Heart left ventricle (tissue), 16 donors: ENCODE measurements at regions of chrX and their contacts with region 1.

Region 1: GRCh38 chrX:53422086-53422860 is at the start of gene SMC1A:
- DNase-seq: peak; percentile 94 to 99 (median 97)
- ATAC-seq: peak; percentile 97 to 99 (median 98)
- H3K4me3 ChIP-seq: peak within 1 kb of the TSS; percentile 47 to 84 (median 72)
- H3K27ac ChIP-seq: peak within 1 kb of the TSS; percentile 82 to 95 (median 91)
- H3K4me1 ChIP-seq: peaks cover 0 to 23% (median 10%) of the 10 kb centered on the region in 12 donors
- H3K27me3 ChIP-seq: no peaks in the 10 kb centered on the region
- CTCF ChIP-seq: no peak
- POLR2A ChIP-seq: peak in 1 of 2 donors; percentile 57
- total RNA-seq, gene SMC1A: 25.3 to 64.6 (median 36.4) TPM

Region 2: DNA sequence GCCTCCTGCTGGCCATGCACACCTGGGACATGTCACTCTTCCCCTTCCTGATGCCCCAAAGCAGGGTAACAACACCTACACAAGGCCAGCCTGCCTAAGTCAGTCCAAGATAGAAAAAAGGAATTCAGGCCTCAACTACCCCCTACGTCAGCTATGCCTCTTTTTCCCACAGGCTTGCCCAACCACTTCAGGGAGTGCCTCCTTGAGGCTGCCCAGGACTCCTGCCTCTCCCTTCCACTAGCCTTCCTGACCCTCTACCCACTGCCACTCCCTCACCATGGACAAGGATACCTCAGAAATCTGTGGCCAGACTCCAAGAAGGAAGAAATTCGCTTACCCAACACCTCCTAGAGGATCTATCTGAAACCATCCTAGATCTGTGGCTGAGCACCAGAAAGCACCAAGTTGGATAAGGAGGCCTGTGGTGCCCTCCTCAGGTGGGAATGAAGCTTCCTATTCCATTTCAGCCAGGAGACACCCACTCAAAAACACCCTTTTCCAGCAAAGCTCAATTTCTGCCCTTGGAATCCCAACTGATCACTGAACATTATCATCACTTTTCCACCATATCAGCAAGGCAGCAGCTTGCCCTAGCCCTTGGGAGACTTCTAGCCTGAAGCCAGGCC is 199.1 kb before region 1 on chrX:
- intact Hi-C with region 1: no loop called
- DNase-seq: no peak
- ATAC-seq: no peak
- H3K4me3 ChIP-seq: peak overlapping the region in 10 of 12 donors; percentile 77 to 97 (median 90)
- H3K27ac ChIP-seq: peak overlapping the region in 1 of 12 donors; percentile 91
- H3K4me1 ChIP-seq: peaks cover 0 to 43% (median 24%) of the 10 kb centered on the region in 12 donors
- H3K27me3 ChIP-seq: no peaks in the 10 kb centered on the region
- CTCF ChIP-seq: no peak
- POLR2A ChIP-seq: no peak

Region 3: GRCh38 chrX:53284684-53285447 is 137.4 kb before region 1 on chrX:
- intact Hi-C with region 1: loop called in 1 of 10 experiments (anchors 10 kb)
- DNase-seq: peak; percentile 34 to 74 (median 62)
- ATAC-seq: peak in 3 of 4 donors; percentile 41 to 48 (median 42)
- H3K4me3 ChIP-seq: no peak overlapping the region
- H3K27ac ChIP-seq: peak overlapping the region in 3 of 12 donors; percentile 8 to 16 (median 13)
- H3K4me1 ChIP-seq: peaks cover 0 to 61% (median 22%) of the 10 kb centered on the region in 12 donors
- H3K27me3 ChIP-seq: peaks cover 0 to 35% (median 0%) of the 10 kb centered on the region in 9 donors
- CTCF ChIP-seq: peak; percentile 62 to 91 (median 72)
- POLR2A ChIP-seq: no peak